ENCODE measurements at regions of chr19 and their contacts with region 1.

Region 1: DNA sequence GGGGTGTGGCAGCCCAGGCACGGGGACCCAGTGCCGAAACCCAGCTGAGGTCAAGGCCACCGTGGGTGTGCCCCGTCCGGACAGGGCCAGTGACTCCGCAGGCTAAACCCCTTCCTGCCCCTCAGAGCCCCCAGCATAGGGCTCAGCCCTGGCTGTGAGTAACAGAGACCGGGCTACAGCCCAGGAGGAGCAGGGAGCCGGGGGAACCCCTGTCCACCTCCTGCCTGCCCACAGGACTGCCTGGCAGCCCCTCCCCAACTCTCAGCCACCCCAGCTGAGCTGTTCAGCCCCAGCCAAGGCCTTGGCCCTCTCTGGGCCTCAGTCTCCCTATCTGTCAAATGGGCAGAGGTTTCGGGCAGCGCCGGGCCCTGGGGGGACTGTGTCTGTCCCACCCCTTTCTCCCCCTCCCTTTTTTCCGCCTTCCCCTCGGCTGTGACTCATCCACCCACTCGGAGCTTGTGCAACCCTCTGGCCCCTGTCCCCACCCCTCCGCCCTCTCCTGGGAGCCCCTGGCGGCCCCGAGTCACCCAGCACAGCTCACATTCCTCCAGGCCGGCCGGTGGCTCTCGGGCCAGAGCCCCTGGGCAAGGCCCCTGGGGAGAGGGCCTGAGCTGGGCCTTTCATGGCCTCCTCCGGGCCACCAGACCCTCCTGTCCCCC is 8.5 kb downstream of the ZBTB7A start:
- DNase-seq: no peak
- ATAC-seq: peak; percentile 9
- H3K4me3 ChIP-seq: no peak overlapping the region
- H3K27ac ChIP-seq: peak overlapping the region; percentile 87; the same call in 1 of the 2 replicates
- H3K4me1 ChIP-seq: peaks cover 25% of the 10 kb centered on the region
- H3K27me3 ChIP-seq: no peaks in the 10 kb centered on the region
- CTCF ChIP-seq: no peak
- EP300 ChIP-seq: no peak
- POLR2A ChIP-seq: no peak
- RAD21 ChIP-seq: no peak

Region 2: GRCh38 chr19:4007021-4007835 is 50.9 kb before region 1 on chr19 and contains the start of gene PIAS4:
- CTCF ChIA-PET with region 1: no interaction called
- POLR2A ChIA-PET with region 1: interaction called, 11 read pairs
- RAD21 ChIA-PET with region 1: interaction called, 4 read pairs
- SMC1A ChIA-PET with region 1: interaction called, 3 read pairs
- in situ Hi-C with region 1: no loop called
- intact Hi-C with region 1: no loop called
- DNase-seq: peak; percentile 69
- ATAC-seq: peak; percentile 98
- H3K4me3 ChIP-seq: peak within 1 kb of the TSS; percentile 88
- H3K27ac ChIP-seq: peak within 1 kb of the TSS; percentile 62
- H3K4me1 ChIP-seq: peaks cover 7% of the 10 kb centered on the region; the same call in 1 of the 2 replicates
- H3K27me3 ChIP-seq: no peaks in the 10 kb centered on the region
- CTCF ChIP-seq: 0 out of 6 replicates have a peak, but pooled peaks of 1 of the 3 experiments have one; percentile 3
- EP300 ChIP-seq: 0 out of 4 replicates have a peak, but pooled peaks of 1 of the 2 experiments have one; percentile 3
- POLR2A ChIP-seq: peak; percentile 92
- RAD21 ChIP-seq: no peak
- polyA plus RNA-seq, gene PIAS4: 0.13 to 0.40 TPM

Region 3: GRCh38 chr19:4077882-4078614 is 19.9 kb after region 1 on chr19:
- CTCF ChIA-PET with region 1: interaction called, 4 read pairs
- POLR2A ChIA-PET with region 1: interaction called, 15 read pairs
- RAD21 ChIA-PET with region 1: no interaction called
- SMC1A ChIA-PET with region 1: no interaction called
- in situ Hi-C with region 1: no loop called
- intact Hi-C with region 1: no loop called
- DNase-seq: no peak
- ATAC-seq: peak; percentile 96
- H3K4me3 ChIP-seq: peak overlapping the region; percentile 74
- H3K27ac ChIP-seq: peak overlapping the region; percentile 72
- H3K4me1 ChIP-seq: peaks cover 14% of the 10 kb centered on the region
- H3K27me3 ChIP-seq: no peaks in the 10 kb centered on the region
- CTCF ChIP-seq: no peak
- EP300 ChIP-seq: peak in 1 of 2 experiments; percentile 10; a peak in 1 of 4 replicates
- POLR2A ChIP-seq: peak; percentile 47; the same call in 1 of the 2 replicates
- RAD21 ChIP-seq: no peak

Region 4: DNA sequence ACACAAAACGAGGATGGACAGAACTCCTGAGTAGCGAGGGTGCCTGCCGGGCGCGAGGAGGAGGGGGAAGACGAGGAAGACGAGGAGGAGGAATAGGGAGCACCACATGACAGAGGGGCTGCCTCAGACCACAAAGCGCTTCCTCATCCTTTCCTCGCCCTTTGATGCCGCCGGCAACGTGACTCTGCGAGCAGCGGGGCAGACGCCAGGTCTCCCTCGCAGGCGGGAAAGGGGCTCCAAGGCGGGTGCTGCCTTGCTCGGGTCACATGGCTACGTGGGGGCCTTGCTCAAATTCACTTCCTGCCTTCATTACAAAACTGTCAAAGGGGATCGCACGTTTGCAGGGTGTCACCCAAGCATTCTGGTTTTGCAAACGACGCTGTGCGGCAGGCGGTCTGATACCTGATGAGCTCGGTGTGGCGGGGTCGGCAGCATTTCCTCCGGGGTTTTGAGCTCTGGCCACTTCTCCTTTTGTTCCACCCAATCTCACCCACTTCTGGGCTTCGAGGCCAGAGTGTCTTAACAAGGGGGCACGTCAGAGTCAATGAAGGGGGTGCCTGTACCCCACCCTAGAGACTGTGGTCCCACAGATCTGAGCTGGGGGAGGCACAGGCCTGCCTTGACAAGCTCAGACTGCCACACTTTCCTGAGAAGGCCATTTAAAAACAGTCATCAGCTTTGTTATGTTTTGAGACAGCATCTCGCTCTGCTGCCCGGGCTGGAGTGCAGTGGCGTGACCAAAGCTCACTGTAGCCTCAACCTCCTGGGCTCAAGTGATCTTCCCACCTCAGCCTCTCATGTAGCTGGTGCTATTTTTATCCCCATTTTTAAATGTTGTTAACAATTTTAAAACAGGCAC is 50.8 kb after region 1 on chr19:
- CTCF ChIA-PET with region 1: interaction called, 3 read pairs
- POLR2A ChIA-PET with region 1: interaction called, 5 read pairs
- RAD21 ChIA-PET with region 1: interaction called, 10 read pairs
- SMC1A ChIA-PET with region 1: interaction called, 9 read pairs
- in situ Hi-C with region 1: no loop called
- intact Hi-C with region 1: no loop called
- DNase-seq: peak; percentile 79
- ATAC-seq: peak; percentile 94
- H3K4me3 ChIP-seq: 0 out of 2 replicates have a peak overlapping the region, but pooled peaks have one; percentile 26
- H3K27ac ChIP-seq: peak overlapping the region; percentile 95
- H3K4me1 ChIP-seq: peaks cover 32% of the 10 kb centered on the region
- H3K27me3 ChIP-seq: no peaks in the 10 kb centered on the region
- CTCF ChIP-seq: no peak
- EP300 ChIP-seq: peak; percentile 63 to 65; a peak in 2 of 4 replicates
- POLR2A ChIP-seq: peak; percentile 73; the same call in 1 of the 2 replicates
- RAD21 ChIP-seq: peak; percentile 8; the same call in 1 of the 2 replicates

Region 5: GRCh38 chr19:4115050-4115817 is 57.1 kb after region 1 on chr19:
- CTCF ChIA-PET with region 1: interaction called, 12 read pairs
- POLR2A ChIA-PET with region 1: interaction called, 4 read pairs
- RAD21 ChIA-PET with region 1: interaction called, 8 read pairs
- SMC1A ChIA-PET with region 1: interaction called, 6 read pairs
- in situ Hi-C with region 1: no loop called
- intact Hi-C with region 1: no loop called
- DNase-seq: peak; percentile 67
- ATAC-seq: peak; percentile 96
- H3K4me3 ChIP-seq: peak overlapping the region; percentile 50
- H3K27ac ChIP-seq: peak overlapping the region; percentile 55
- H3K4me1 ChIP-seq: peaks cover 28% of the 10 kb centered on the region
- H3K27me3 ChIP-seq: no peaks in the 10 kb centered on the region
- CTCF ChIP-seq: peak in 2 of 3 experiments; percentile 2 to 33; a peak in 3 of 6 replicates
- EP300 ChIP-seq: 0 out of 4 replicates have a peak, but pooled peaks of 1 of the 2 experiments have one; percentile 51
- POLR2A ChIP-seq: no peak; the same call in 1 of the 2 replicates
- RAD21 ChIP-seq: 0 out of 2 replicates have a peak, but pooled peaks have one; percentile 2

Region 6: GRCh38 chr19:4149518-4150288 is 91.5 kb after region 1 on chr19:
- CTCF ChIA-PET with region 1: no interaction called
- POLR2A ChIA-PET with region 1: no interaction called
- RAD21 ChIA-PET with region 1: no interaction called
- SMC1A ChIA-PET with region 1: no interaction called
- in situ Hi-C with region 1: no loop called
- intact Hi-C with region 1: no loop called
- DNase-seq: no peak
- ATAC-seq: no peak
- H3K4me3 ChIP-seq: no peak overlapping the region
- H3K27ac ChIP-seq: no peak overlapping the region
- H3K4me1 ChIP-seq: 0 out of 2 replicates have a peak, but pooled peaks cover 2% of the 10 kb centered on the region
- H3K27me3 ChIP-seq: peaks cover 2 to 3% of the 10 kb centered on the region in 2 experiments; a peak in 1 of 4 replicates
- CTCF ChIP-seq: no peak
- EP300 ChIP-seq: no peak
- POLR2A ChIP-seq: no peak
- RAD21 ChIP-seq: no peak

Region 7: GRCh38 chr19:4217429-4218264 is 159.5 kb after region 1 on chr19:
- CTCF ChIA-PET with region 1: no interaction called
- POLR2A ChIA-PET with region 1: no interaction called
- RAD21 ChIA-PET with region 1: no interaction called
- SMC1A ChIA-PET with region 1: no interaction called
- in situ Hi-C with region 1: no loop called
- intact Hi-C with region 1: no loop called
- DNase-seq: no peak
- ATAC-seq: no peak
- H3K4me3 ChIP-seq: no peak overlapping the region
- H3K27ac ChIP-seq: no peak overlapping the region
- H3K4me1 ChIP-seq: peaks cover 31% of the 10 kb centered on the region
- H3K27me3 ChIP-seq: no peaks in the 10 kb centered on the region
- CTCF ChIP-seq: no peak
- EP300 ChIP-seq: no peak
- POLR2A ChIP-seq: no peak
- RAD21 ChIP-seq: no peak